Activated T-helper 1 cell treated with anti-CD3 and anti-CD28 coated beads, Interleukin-12 subunit alpha, Interleukin-12 subunit beta, Interleukin-2, Interleukin-4 antibody, amounts not matched to agents 30 ng/mL and 10 ng/mL and 1 ng/mL, durations not matched to agents 14 hours and 24 hours and 36 hours (primary cell): ENCODE measurements at regions of chr12 and their contacts with region 1.

Region 1: DNA sequence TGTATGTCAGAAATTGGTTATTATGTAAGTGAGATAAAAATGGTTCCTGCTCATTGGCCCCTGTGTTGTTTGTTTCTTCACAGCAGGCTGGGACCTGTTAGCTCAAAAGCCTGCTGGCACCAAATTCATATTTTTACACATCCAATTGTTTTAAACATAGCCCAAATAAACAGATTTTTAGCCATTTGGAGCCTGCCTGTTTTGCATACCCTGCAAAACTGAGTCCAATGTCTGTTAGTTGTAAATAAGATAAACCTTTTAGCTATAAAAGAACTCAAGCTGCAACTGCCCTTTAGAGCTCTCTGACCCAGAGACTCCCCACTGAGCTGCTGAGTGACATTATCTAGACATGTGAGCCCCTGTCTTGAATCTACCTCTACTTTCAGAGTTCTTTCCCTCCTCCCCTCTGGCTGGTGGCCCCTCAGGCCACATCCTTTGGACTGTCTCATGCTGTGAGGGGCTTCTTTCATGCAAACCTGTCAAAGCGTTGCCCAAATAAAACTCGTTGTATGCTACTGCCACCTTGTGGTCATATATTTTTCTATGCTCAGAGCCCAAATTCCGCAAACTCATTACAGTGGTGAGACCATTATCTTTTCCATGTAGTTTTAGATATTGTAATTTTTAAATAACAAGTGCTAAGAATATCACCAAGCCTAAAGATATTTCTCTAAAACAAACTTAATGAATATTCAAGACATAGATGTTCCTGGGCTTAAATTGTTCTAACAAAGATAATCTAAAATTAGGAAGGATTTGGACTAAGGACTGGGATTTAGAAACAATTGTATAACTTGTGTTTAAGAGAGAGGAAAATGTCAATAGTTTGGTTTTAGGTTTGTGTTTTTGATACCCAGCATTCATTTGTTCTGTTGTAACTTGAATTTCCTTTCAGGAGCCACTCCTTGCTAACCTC is 337.9 kb downstream of the AACS start:
- DNase-seq: no peak
- H3K4me3 Mint-ChIP-seq: no peak overlapping the region
- H3K27ac Mint-ChIP-seq: no peak overlapping the region
- H3K4me1 Mint-ChIP-seq: peaks cover 12% of the 10 kb centered on the region
- H3K27me3 Mint-ChIP-seq: peaks cover 4% of the 10 kb centered on the region

Region 2: GRCh38 chr12:125240717-125241116 is 162.4 kb before region 1 on chr12:
- intact Hi-C with region 1: loop called (anchors 1 kb)
- DNase-seq: no peak
- H3K4me3 Mint-ChIP-seq: no peak overlapping the region
- H3K27ac Mint-ChIP-seq: no peak overlapping the region
- H3K4me1 Mint-ChIP-seq: no peaks in the 10 kb centered on the region
- H3K27me3 Mint-ChIP-seq: peaks cover 5% of the 10 kb centered on the region

Region 3: DNA sequence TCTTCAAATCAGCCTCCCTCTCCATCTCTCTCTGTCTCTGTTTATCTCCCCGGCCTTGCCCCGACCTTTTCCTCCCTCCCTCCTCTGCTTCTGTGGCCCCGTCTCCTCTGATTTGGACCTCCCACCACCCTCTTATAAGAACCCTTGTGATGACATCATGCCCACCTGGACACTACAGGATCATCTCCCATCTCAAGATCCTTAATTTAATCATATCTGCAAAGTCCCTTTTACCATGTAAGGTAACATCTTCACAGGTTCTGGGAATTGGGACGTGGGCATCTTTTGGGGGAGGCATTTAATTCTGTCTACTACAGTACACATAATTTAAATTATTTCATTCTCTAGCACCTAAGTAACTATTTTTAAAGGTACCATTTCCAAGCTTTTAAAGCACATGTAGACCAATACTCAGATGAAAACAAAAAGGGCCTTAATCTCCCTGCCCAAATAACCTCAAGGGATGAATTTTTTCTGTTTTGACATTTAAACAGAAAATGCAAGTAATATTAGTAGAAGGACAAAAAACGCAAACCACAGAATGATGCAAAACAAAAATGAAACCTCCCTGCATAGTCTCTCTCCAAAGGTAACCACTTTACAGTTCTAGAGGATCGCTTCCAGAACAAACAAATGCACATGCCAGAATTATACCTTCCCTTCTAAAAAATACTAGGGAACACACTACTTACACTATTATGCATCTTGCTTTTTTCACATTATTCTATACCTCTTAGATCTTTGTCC is 115.9 kb before region 1 on chr12:
- intact Hi-C with region 1: no loop called
- DNase-seq: no peak
- H3K4me3 Mint-ChIP-seq: no peak overlapping the region
- H3K27ac Mint-ChIP-seq: no peak overlapping the region
- H3K4me1 Mint-ChIP-seq: peaks cover 10% of the 10 kb centered on the region
- H3K27me3 Mint-ChIP-seq: no peaks in the 10 kb centered on the region

Region 4: DNA sequence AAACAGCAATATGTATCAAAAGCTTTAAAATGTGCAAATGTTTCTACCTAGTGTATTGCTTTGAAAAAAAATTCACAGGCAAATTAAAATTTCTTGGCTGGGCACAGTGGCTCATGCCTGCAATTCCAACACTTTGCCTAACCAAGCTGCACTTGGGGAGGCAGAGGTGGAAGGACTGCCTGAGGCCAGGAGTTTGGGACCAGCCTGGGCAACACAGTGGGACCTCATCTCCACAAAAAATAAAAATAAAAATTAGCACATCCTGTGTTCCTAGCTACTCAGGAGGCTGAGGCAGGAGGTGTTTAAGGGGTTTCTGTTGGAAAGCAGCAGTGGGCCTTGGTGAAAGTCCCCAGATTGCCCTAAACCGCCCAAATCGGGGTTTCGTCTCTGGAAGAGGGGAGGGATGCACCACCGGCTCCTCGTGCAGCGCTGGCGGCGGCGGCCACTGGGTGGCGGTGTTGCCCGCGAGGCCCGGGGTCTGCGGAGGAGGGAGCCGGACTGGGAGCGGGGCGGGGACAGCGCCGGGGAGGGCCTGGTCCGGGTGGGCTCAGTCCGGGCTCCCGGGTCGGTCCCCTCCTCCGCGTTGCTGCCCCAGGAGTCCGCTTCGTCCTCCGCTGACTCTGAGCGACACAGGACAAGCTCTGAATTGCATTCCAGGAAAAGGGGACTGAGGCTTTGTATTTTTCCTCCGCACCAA is 72.3 kb before region 1 on chr12:
- intact Hi-C with region 1: loop called (anchors 1 kb)
- DNase-seq: peak; percentile 37
- H3K4me3 Mint-ChIP-seq: no peak overlapping the region
- H3K27ac Mint-ChIP-seq: no peak overlapping the region
- H3K4me1 Mint-ChIP-seq: no peaks in the 10 kb centered on the region
- H3K27me3 Mint-ChIP-seq: peaks cover 17% of the 10 kb centered on the region

Region 5: GRCh38 chr12:125533434-125534029 is 130.4 kb after region 1 on chr12:
- intact Hi-C with region 1: no loop called
- DNase-seq: no peak
- H3K4me3 Mint-ChIP-seq: no peak overlapping the region
- H3K27ac Mint-ChIP-seq: no peak overlapping the region
- H3K4me1 Mint-ChIP-seq: no peaks in the 10 kb centered on the region
- H3K27me3 Mint-ChIP-seq: peaks cover 2% of the 10 kb centered on the region